Head of caudate nucleus (tissue), 42 donors: ENCODE measurements at regions of chr13 and their contacts with region 1.

Region 1: DNA sequence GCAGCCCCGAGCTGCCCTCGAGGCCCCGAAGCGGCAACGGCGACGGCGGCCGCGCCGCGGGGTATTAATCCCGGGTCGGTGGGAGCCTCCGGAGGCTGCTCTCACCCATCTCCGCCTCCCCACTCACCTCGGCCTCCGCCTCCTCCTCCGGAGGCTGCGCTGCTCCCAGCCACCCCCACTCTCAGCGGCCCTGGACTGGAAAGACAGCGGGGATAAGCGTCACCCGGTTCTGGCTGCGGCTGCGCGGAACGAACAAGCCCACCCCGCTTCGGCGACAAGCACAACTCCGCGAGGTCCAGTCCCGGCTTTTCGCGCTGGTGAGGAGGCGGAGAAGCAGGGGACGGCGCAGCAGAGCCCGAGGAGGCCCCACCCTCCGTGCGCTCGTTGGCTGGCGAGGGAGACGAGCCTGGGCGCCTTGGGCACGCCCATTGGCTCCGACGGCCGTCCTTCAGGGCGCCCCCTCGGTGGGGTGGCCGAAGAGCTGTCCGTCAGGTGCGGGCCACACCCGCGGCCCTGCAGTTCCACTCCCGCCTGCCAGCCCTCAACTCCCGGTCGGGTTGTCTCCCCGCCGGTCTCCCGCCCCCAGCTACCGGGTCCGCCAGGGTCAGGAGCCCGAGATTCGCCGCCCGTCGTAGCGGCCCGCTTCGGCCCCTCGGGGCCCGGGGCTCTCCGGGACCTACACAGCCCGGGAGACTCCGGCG is at the start of gene ZMYM5:
- DNase-seq: peak; percentile 95 to 100 (median 99)

Region 2: DNA sequence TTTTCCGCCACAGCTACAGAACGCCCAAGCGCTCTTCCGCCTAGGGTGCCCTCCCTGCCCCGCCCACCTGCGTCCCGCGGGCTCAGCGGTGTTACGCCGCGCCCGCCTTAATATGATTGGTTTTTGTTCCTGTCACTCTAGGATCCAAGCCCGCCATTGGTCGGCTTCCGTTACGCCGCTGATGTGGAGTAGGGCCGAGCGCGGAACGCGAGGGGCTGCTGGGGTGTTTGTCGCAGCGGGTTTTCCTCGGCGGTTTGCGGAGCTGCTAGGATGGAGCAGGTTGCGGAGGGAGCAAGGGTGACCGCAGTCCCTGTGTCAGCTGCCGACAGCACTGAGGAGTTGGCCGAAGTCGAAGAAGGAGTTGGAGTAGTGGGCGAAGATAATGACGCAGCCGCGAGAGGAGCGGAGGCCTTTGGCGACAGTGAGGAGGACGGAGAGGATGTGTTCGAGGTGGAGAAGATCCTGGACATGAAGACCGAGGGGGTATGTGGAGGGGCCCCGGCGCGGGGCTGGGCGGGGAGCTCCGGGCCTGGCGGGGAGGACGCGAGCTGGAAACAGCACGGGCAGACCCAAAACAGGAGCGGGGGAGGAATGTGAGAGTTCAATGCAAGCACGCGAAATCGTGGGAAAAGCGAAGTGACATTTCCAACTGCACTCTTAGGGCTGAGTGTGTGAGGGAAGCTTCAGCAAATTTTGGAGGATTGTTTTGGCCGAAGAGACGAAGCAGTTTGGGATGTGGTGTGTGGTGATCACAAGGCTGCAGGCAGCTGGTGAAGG is 229.8 kb before region 1 on chr13 and contains the start of gene MPHOSPH8:
- intact Hi-C with region 1: loop called (anchors 5 kb)
- DNase-seq: peak; percentile 89 to 98 (median 95)

Region 3: DNA sequence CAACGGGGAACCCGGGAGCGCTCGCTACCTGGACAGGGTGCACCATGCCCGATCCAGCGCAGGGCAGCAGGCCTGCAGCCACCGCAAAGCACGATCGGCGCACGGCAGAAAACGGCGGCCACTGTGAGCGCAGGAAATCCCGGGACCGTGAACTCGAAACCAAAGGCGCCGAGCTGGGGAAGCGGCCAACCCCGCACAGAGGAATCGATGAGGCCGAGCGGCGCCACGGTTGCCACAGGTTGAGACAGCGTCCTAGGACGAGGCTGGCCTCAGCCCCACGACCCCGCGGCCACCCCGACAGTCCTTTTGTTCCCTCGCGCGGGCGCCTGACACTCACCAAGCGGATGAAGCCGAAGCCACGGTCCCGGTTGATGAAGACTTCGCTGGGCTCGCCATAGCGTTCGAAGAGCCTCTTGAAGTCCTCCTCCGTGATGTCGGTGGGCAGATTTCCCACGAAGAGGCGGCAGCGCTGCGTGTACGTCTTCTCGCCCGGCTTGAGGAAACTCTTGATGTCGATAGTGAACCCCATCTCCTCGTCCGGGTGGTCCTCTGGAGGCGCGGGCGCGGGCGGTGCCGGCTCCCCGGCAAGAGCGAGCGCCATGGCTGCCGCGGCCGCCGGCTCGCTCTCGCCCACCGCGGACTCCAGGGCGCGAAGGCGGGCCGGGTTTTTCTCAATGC is 81.3 kb before region 1 on chr13:
- intact Hi-C with region 1: loop called (anchors 2 kb)
- DNase-seq: peak; percentile 25 to 82 (median 61)

Region 4: DNA sequence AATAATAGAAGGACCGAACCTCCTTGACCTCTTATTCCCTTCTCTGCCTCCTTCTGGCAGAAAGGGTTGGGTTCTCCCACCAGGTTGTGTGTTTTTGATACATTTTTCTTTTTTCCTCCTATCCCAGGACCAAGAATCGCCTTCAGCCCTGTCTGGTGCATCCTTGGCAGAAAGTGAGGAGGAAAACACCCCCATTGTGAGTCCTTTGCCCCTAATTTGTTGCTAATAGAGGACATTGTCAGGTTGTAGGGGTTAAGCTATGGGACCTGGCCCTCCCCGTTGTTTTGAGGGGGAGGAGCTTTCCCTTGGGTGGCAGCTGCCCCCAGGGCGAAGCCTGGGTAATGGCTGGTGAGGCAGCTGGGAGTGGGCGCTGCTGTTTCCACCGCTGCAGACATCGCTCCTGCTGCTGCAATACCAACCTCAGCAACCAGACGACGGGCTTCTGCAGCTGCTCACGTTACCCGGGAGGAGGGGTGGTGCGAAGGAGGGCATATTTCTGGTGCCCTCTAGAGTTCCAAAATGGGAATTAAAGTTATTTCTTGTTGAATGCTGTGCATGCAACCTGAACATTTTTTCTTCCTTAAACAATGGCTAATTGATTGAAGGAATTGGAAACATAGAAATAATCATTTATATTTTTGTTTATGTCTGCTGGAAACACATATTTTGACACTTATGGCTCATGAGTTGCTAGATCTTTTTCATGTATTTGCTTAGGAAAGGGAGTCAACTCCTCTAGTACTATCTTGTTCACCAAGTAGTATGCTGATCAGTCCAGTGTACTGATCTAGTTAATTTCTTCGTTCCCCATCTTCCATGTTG is 96.6 kb after region 1 on chr13:
- intact Hi-C with region 1: loop called (anchors 2 kb)
- DNase-seq: peak; percentile 75 to 96 (median 89)